GM10248 (cell line): ENCODE measurements at regions of chr1 and their contacts with region 1.

Region 1: GRCh38 chr1:75796376-75797272 is at the start of gene MSH4:
- DNase-seq: peak; percentile 10
- CTCF ChIP-seq: no peak

Region 2: GRCh38 chr1:75811211-75811981 is 14.8 kb after region 1 on chr1:
- CTCF ChIA-PET with region 1: interaction called, 10 read pairs
- POLR2A ChIA-PET with region 1: no interaction called
- DNase-seq: no peak
- CTCF ChIP-seq: no peak